ENCODE measurements at regions of chr2 and their contacts with region 1.

Region 1: DNA sequence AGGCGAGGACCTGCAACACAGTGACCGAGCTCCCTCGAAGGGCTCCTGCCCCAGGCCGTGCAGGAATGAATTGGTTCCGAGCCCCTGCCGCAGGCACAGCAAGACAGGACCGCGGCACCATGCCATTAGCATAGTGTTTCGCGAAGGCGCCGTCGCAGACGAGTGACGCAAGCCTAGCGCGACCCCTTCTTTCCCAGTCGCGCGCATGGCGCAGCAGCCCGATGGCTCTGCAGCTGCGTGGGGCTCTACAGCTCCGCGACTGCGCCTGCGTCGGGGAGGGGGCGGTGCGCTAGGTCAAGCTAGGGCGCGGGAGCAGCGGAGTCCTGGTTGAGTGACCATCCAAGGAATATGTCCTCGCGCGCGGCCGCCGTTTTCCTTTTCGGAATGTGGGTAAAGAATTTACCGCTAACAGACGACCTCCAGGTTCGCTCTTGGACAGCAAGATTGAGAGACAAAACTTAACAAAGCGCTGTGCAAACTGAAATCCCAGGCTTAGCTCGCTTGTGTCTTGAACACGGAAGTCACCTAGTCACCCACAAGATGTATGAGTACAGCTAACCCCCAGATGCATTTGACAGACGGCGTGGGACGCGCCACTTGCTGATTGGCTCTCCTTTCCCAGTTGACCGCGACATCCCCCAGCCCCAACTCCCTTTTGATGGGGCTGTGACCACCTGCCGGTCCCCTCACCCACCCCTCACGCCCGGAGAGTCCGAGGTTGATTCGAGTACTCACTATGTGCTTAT is at the start of gene TRMT61B:
- DNase-seq: peak; percentile 99
- ATAC-seq: peak; percentile 100
- H3K4me3 ChIP-seq: peak within 1 kb of the TSS; percentile 88
- H3K27ac ChIP-seq: peak within 1 kb of the TSS; percentile 78
- H3K4me1 ChIP-seq: peaks cover 15% of the 10 kb centered on the region
- H3K27me3 ChIP-seq: no peaks in the 10 kb centered on the region
- CTCF ChIP-seq: no peak
- total RNA-seq, gene TRMT61B: 8.7 to 12.9 (median 11.3) TPM

Region 2: DNA sequence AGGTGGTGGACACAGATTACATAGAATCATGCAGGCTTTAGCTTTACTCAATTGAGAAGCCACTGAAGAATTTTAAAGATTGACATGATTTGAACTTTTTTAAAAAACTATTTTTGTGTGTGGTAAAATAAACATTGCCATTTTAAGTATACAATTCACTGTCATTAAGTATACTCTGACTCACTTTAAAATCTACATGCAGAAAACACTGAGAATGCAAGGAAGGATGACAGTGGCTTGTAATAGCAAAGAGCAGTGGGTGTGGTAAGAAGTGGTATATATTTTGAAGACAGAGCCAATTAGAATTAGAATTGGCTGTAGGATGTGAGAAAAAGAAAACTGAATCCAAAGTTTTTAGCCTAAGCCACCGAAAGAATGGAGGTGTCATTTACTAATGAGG is 15.1 kb before region 1 on chr2:
- intact Hi-C with region 1: no loop called
- DNase-seq: no peak
- ATAC-seq: no peak
- H3K4me3 ChIP-seq: no peak overlapping the region
- H3K27ac ChIP-seq: no peak overlapping the region
- H3K4me1 ChIP-seq: no peaks in the 10 kb centered on the region
- H3K27me3 ChIP-seq: no peaks in the 10 kb centered on the region
- CTCF ChIP-seq: no peak

Region 3: GRCh38 chr2:28894470-28895177 is 24.3 kb after region 1 on chr2 and contains the start of gene WDR43:
- intact Hi-C with region 1: loop called in 1 of 2 experiments (anchors 2 kb)
- DNase-seq: peak; percentile 98 to 99
- ATAC-seq: peak; percentile 96 to 98 (median 97)
- H3K4me3 ChIP-seq: peak within 1 kb of the TSS; percentile 99
- H3K27ac ChIP-seq: peak within 1 kb of the TSS; percentile 96
- H3K4me1 ChIP-seq: peaks cover 34% of the 10 kb centered on the region
- H3K27me3 ChIP-seq: no peaks in the 10 kb centered on the region
- CTCF ChIP-seq: no peak
- total RNA-seq, gene WDR43: 30.5 to 89.5 (median 76.1) TPM